ENCODE measurements at regions of chr20 and their contacts with region 1.

Region 1: GRCh38 chr20:36886859-36887751 is 11.2 kb downstream of the TLDC2 start:
- DNase-seq: peak; percentile 62 to 86 (median 76)
- ATAC-seq: peak; percentile 88
- H3K4me3 ChIP-seq: no peak overlapping the region
- H3K4me3 Mint-ChIP-seq: no peak overlapping the region
- H3K27ac ChIP-seq: peak overlapping the region; percentile 25 to 34
- H3K27ac Mint-ChIP-seq: peak overlapping the region; percentile 61
- H3K4me1 ChIP-seq: peaks cover 13% of the 10 kb centered on the region
- H3K4me1 Mint-ChIP-seq: peaks cover 16% of the 10 kb centered on the region
- H3K27me3 ChIP-seq: no peaks in the 10 kb centered on the region
- H3K27me3 Mint-ChIP-seq: no peaks in the 10 kb centered on the region
- CTCF ChIP-seq: peak; percentile 80

Region 2: DNA sequence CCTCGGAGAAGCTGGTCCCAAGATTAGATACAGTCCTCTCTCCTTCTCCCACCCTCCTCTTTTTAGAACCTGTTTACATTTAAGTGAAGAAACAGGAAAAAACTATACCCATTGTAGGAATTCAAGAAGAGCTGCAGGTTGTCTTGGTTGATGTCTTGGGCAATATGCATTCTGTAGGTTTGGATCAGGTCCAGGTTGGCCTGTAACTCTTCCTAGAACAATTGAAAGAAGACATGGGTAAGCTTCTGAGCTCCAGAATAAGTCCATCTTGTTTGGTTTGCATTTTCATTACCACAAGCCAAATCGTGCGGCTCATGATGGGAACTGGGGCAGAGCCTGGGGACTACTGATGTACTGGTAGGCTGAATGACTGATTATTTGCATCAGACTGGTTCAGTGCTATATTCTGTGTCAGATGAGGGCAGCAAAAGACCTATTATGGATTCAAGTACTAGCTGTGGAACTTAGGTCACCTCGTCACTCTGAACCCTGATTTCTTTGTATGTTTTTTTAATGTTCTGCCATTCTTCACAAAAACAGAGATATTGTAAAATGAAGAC is 220.8 kb before region 1 on chr20:
- CTCF ChIA-PET with region 1: no interaction called
- POLR2A ChIA-PET with region 1: no interaction called
- intact Hi-C with region 1: loop called in 1 of 2 experiments (anchors 5 kb)
- DNase-seq: peak in 3 of 14 experiments; percentile 30 to 42 (median 35)
- ATAC-seq: no peak
- H3K4me3 ChIP-seq: no peak overlapping the region
- H3K4me3 Mint-ChIP-seq: no peak overlapping the region
- H3K27ac ChIP-seq: no peak overlapping the region
- H3K27ac Mint-ChIP-seq: no peak overlapping the region
- H3K4me1 ChIP-seq: no peaks in the 10 kb centered on the region
- H3K4me1 Mint-ChIP-seq: no peaks in the 10 kb centered on the region
- H3K27me3 ChIP-seq: no peaks in the 10 kb centered on the region
- H3K27me3 Mint-ChIP-seq: no peaks in the 10 kb centered on the region
- CTCF ChIP-seq: no peak

Region 3: GRCh38 chr20:36717657-36718056 is 169.4 kb before region 1 on chr20:
- CTCF ChIA-PET with region 1: no interaction called
- POLR2A ChIA-PET with region 1: no interaction called
- intact Hi-C with region 1: loop called in 1 of 2 experiments (anchors 5 kb)
- DNase-seq: peak in 4 of 14 experiments; percentile 35 to 55 (median 40)
- ATAC-seq: peak; percentile 54
- H3K4me3 ChIP-seq: no peak overlapping the region
- H3K4me3 Mint-ChIP-seq: no peak overlapping the region
- H3K27ac ChIP-seq: no peak overlapping the region
- H3K27ac Mint-ChIP-seq: no peak overlapping the region
- H3K4me1 ChIP-seq: no peaks in the 10 kb centered on the region
- H3K4me1 Mint-ChIP-seq: no peaks in the 10 kb centered on the region
- H3K27me3 ChIP-seq: no peaks in the 10 kb centered on the region
- H3K27me3 Mint-ChIP-seq: no peaks in the 10 kb centered on the region
- CTCF ChIP-seq: peak; percentile 50

Measured in CD4-positive, alpha-beta T cell (primary cell).